GM13977 (cell line): ENCODE measurements at regions of chr5 and their contacts with region 1.

Region 1: DNA sequence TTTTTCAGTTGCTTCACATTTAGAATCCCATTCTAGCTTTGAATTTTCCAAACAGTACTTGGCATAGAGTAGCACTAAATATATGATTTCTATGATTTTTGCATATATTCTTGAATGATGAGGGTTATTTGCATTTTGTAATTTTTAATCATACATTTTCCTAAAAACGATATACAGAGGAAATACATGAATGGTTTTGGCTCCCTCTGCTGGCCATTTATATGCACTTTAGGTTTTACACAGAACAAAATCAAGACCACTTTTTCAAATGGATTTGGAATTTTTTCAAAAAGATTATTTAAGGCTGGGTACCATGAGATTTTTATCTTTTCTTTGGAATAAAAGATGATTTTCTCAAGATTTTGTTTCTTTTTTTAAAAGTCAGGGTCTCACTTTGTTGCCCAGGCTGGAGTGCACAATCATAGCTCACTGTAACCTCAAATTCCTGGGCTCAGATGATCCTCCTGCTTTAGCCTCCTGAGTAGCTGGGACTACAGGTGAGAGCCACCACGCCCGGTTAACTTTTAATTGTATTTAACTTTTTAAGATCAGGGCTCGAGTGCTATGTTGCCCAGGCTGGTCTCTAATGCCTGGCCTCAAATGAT is 16.7 kb upstream of the COMMD10 start:
- DNase-seq: peak; percentile 38
- CTCF ChIP-seq: peak; percentile 66

Region 2: GRCh38 chr5:115309751-115310370 is 758.3 kb before region 1 on chr5:
- in situ Hi-C with region 1: loop called (anchors 25 kb)
- DNase-seq: no peak
- CTCF ChIP-seq: peak; percentile 55

Region 3: GRCh38 chr5:115841382-115842088 is 226.6 kb before region 1 on chr5 and contains the starts of genes AP3S1 and ATG12:
- in situ Hi-C with region 1: loop called (anchors 25 kb)
- DNase-seq: peak; percentile 88
- CTCF ChIP-seq: no peak